Common myeloid progenitor, CD34-positive (primary cell): ENCODE measurements at regions of chr2 and their contacts with region 1.

Region 1: DNA sequence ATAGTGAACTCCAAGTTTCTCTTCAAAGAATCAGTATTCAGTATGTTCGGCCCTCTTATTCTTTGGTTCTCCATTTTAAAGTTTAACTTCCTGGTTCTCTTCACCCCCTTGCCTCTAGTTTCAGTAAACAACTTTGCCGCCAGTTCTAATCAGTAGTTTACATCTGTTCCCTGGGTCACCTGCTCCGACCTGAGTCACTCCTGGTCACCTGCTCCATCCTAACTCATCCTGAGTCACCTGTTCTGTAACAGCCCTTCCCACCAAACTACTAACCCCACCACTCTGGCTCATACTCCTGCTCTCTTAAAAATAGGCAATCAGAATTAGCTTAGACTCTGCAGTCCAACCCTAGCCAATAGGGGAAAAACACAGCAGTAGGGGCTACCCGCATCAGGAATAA is 23.7 kb upstream of the TEX51 start:
- DNase-seq: no peak
- H3K4me3 ChIP-seq: no peak overlapping the region
- H3K27ac ChIP-seq: no peak overlapping the region
- H3K4me1 ChIP-seq: no peaks in the 10 kb centered on the region
- H3K27me3 ChIP-seq: no peaks in the 10 kb centered on the region

Region 2: DNA sequence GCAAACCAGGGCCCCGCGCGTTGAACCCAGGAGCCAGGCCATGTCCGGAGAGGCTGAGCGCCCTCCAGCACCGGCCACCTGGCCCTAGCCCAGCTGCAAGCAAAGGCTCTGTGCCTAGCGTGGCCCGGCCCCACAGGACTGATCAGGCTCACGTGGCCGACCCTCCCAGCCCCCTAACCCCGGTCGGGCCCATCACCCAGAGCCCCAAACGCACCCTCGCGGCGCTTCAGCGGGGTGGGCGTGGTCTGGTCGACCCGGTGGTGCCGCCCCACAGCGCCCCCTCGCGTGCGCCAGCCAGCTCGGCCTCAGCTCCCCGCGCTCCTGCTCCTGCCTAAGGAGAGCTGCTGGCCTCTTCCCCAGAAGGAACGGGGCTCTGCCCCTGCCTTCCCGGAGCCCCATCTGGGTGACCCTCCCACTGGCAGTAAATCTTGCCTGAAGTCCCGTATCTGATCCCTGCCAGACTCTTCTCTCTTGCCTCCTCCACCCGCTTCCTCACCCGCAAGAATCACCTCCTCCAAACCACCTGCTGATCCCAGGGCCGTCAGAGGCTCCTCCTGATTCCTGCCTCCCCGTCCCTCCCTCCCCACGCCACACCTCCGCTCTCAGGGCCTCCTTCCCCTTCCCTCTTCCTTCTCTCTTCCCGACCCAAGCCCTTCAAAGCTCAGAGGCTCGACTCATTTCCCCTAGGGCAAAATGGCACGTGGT is 11.4 kb after region 1 on chr2:
- CTCF ChIA-PET with region 1: interaction called, 10 read pairs
- POLR2A ChIA-PET with region 1: no interaction called
- DNase-seq: peak; percentile 64 to 80 (median 77)
- H3K4me3 ChIP-seq: peak overlapping the region in 4 of 7 experiments; percentile 15 to 70 (median 57)
- H3K27ac ChIP-seq: no peak overlapping the region
- H3K4me1 ChIP-seq: peaks cover 0 to 12% (median 9%) of the 10 kb centered on the region in 4 experiments
- H3K27me3 ChIP-seq: peaks cover 0 to 15% (median 2%) of the 10 kb centered on the region in 5 experiments